ENCODE measurements at regions of chr4 and their contacts with region 1.

Region 1: GRCh38 chr4:80184053-80184790 is 13.1 kb upstream of the PRDM8 start:
- DNase-seq: peak; percentile 96
- ATAC-seq: peak; percentile 78
- H3K4me3 Mint-ChIP-seq: peak overlapping the region; percentile 85
- H3K27ac Mint-ChIP-seq: peak overlapping the region; percentile 92
- H3K4me1 Mint-ChIP-seq: peaks cover 47% of the 10 kb centered on the region
- H3K27me3 Mint-ChIP-seq: peaks cover 10% of the 10 kb centered on the region
- CTCF ChIP-seq: peak; percentile 95

Region 2: DNA sequence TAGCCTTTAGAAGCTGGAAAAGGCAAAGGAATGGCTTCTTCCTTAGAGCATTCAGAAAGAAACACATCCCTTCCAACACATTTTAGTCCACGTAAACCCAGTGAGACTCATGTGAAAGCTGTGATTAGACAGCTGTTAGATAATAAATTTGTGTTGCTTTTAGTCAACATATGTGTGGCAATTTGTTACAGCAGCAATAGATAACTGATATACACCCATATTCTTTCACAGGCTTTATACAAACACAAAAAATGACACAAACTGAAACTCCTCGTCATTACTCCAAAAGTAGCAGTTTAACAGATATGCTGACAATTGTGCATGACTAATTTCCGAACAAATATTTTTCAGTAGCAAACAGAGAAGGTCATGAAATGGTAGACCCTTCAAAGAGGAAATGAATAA is 176.5 kb before region 1 on chr4:
- CTCF ChIA-PET with region 1: interaction called, 3 read pairs
- POLR2A ChIA-PET with region 1: interaction called, 3 read pairs
- intact Hi-C with region 1: loop called (anchors 5 kb)
- DNase-seq: no peak
- ATAC-seq: peak; percentile 63
- H3K4me3 Mint-ChIP-seq: peak overlapping the region; percentile 7
- H3K27ac Mint-ChIP-seq: peak overlapping the region; percentile 78
- H3K4me1 Mint-ChIP-seq: peaks cover 47% of the 10 kb centered on the region
- H3K27me3 Mint-ChIP-seq: no peaks in the 10 kb centered on the region
- CTCF ChIP-seq: no peak

Region 3: GRCh38 chr4:80072744-80073472 is 111.3 kb before region 1 on chr4 and contains the start of gene ANTXR2:
- CTCF ChIA-PET with region 1: interaction called, 25 read pairs
- POLR2A ChIA-PET with region 1: interaction called, 5 read pairs
- intact Hi-C with region 1: no loop called
- DNase-seq: peak; percentile 76
- ATAC-seq: peak; percentile 69
- H3K4me3 Mint-ChIP-seq: peak within 1 kb of the TSS; percentile 88
- H3K27ac Mint-ChIP-seq: peak within 1 kb of the TSS; percentile 89
- H3K4me1 Mint-ChIP-seq: peaks cover 73% of the 10 kb centered on the region
- H3K27me3 Mint-ChIP-seq: no peaks in the 10 kb centered on the region
- CTCF ChIP-seq: no peak
- total RNA-seq, gene ANTXR2: 3.0 to 3.6 TPM

Region 4: GRCh38 chr4:80138551-80139538 is 45.4 kb before region 1 on chr4:
- CTCF ChIA-PET with region 1: interaction called, 12 read pairs
- POLR2A ChIA-PET with region 1: interaction called, 10 read pairs
- intact Hi-C with region 1: no loop called
- DNase-seq: peak; percentile 79
- ATAC-seq: peak; percentile 94
- H3K4me3 Mint-ChIP-seq: no peak overlapping the region
- H3K27ac Mint-ChIP-seq: peak overlapping the region; percentile 81
- H3K4me1 Mint-ChIP-seq: peaks cover 60% of the 10 kb centered on the region
- H3K27me3 Mint-ChIP-seq: no peaks in the 10 kb centered on the region
- CTCF ChIP-seq: no peak

Region 5: GRCh38 chr4:80173401-80173800 is 10.8 kb before region 1 on chr4:
- CTCF ChIA-PET with region 1: interaction called, 53 read pairs
- POLR2A ChIA-PET with region 1: interaction called, 21 read pairs
- intact Hi-C with region 1: no loop called
- DNase-seq: peak; percentile 75
- ATAC-seq: peak; percentile 86
- H3K4me3 Mint-ChIP-seq: peak overlapping the region; percentile 38
- H3K27ac Mint-ChIP-seq: peak overlapping the region; percentile 90
- H3K4me1 Mint-ChIP-seq: peaks cover 53% of the 10 kb centered on the region
- H3K27me3 Mint-ChIP-seq: no peaks in the 10 kb centered on the region
- CTCF ChIP-seq: no peak

Region 6: GRCh38 chr4:80202190-80202711 is 18.0 kb after region 1 on chr4:
- CTCF ChIA-PET with region 1: interaction called, 44 read pairs
- POLR2A ChIA-PET with region 1: interaction called, 40 read pairs
- intact Hi-C with region 1: loop called (anchors 2 kb)
- DNase-seq: peak; percentile 77
- ATAC-seq: peak; percentile 60
- H3K4me3 Mint-ChIP-seq: peak overlapping the region; percentile 73
- H3K27ac Mint-ChIP-seq: peak overlapping the region; percentile 70
- H3K4me1 Mint-ChIP-seq: peaks cover 26% of the 10 kb centered on the region
- H3K27me3 Mint-ChIP-seq: peaks cover 18% of the 10 kb centered on the region
- CTCF ChIP-seq: peak; percentile 77

Region 7: GRCh38 chr4:80237992-80238391 is 53.8 kb after region 1 on chr4:
- CTCF ChIA-PET with region 1: no interaction called
- POLR2A ChIA-PET with region 1: no interaction called
- intact Hi-C with region 1: no loop called
- DNase-seq: no peak
- ATAC-seq: no peak
- H3K4me3 Mint-ChIP-seq: no peak overlapping the region
- H3K27ac Mint-ChIP-seq: no peak overlapping the region
- H3K4me1 Mint-ChIP-seq: no peaks in the 10 kb centered on the region
- H3K27me3 Mint-ChIP-seq: peaks cover 5% of the 10 kb centered on the region
- CTCF ChIP-seq: no peak